ENCODE measurements at regions of chr6 and their contacts with region 1.

Region 1: DNA sequence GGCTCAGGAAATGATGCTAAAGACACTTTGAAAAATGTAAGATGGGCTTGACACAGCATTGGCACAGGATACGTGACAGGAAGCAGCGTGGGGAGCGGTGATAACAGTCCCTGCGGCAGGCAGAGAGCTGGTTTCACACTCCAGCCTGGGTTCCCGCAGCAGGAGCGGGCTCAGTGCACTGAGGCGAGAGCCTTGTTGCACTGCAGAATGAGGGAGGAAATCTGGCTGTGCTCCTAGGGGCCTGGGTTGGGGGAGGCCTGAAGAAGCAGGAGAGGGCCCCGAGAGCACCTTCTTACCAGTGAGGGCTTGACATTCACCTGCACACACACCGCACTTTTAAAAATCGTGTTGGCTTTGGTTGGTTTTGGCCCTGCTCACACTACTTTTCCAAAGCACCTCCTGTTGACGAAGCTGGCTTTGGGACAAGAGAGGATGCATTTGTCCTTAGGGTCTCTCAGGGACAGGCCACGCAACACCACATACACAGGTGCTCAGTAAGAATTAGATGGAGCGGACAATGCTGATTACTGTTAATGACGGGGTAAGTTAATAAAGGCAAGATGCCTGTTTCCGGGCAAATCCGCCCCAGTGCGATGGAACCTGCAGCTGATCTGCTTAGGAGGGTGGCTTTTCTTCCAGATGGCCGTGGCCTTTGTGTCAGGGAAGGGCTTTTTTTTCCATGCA is 49.4 kb upstream of the ARMC2 start:
- DNase-seq: peak; percentile 88
- ATAC-seq: peak; percentile 98
- H3K4me3 Mint-ChIP-seq: peak overlapping the region; percentile 29
- H3K27ac Mint-ChIP-seq: peak overlapping the region; percentile 90
- H3K4me1 Mint-ChIP-seq: peaks cover 45% of the 10 kb centered on the region
- H3K27me3 Mint-ChIP-seq: no peaks in the 10 kb centered on the region

Region 2: DNA sequence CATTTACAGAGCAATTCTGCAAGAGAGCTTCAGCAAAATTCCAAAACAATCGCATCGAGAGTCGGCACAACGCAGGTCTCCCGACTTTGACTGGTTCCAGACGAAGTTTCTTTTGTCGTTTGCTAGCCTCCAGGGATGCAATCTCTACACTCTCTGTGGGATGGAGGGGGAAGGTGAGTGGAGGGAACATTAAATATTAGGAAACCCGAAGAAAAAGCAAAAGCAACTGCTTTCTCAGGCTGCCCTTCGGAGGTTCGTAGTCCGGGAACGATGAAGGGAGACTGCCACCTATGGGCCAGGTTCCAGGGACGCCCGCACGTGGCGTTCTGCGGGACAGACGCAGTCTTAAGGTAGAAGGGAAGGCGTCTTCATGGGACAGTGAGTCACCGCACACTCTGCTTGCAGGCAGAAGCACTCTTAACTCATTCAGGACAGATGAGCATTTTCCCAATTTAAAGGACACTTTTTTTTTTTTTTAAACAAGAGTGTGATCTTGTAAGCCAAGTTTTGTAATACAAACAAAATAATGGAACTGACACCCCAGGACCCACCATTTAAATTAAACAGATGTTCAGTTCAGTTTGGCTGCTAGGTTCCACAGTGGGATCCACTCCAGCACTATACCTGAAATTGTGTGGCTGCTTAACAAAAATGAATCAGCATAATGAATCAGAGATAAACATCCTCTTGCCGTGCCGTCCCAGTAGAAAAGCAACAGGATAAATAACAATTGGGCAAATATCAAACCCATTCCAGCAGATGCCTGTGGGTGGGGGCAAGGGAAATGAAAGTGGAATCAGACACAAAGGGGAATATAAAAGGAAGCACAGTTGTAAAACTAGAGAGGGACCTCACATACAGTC is 16.4 kb before region 1 on chr6:
- CTCF ChIA-PET with region 1: interaction called, 20 read pairs
- DNase-seq: peak; percentile 90
- ATAC-seq: peak; percentile 99
- H3K4me3 Mint-ChIP-seq: peak overlapping the region; percentile 76
- H3K27ac Mint-ChIP-seq: peak overlapping the region; percentile 61
- H3K4me1 Mint-ChIP-seq: peaks cover 14% of the 10 kb centered on the region
- H3K27me3 Mint-ChIP-seq: peaks cover 17% of the 10 kb centered on the region

Measured in activated CD8-positive, alpha-beta memory T cell treated with anti-CD3 and anti-CD28 coated beads, Interleukin-2, amount 10 ng/mL, durations not matched to agents 7 days and 5 days (primary cell).